ENCODE measurements at regions of chr6 and their contacts with region 1.

Region 1: DNA sequence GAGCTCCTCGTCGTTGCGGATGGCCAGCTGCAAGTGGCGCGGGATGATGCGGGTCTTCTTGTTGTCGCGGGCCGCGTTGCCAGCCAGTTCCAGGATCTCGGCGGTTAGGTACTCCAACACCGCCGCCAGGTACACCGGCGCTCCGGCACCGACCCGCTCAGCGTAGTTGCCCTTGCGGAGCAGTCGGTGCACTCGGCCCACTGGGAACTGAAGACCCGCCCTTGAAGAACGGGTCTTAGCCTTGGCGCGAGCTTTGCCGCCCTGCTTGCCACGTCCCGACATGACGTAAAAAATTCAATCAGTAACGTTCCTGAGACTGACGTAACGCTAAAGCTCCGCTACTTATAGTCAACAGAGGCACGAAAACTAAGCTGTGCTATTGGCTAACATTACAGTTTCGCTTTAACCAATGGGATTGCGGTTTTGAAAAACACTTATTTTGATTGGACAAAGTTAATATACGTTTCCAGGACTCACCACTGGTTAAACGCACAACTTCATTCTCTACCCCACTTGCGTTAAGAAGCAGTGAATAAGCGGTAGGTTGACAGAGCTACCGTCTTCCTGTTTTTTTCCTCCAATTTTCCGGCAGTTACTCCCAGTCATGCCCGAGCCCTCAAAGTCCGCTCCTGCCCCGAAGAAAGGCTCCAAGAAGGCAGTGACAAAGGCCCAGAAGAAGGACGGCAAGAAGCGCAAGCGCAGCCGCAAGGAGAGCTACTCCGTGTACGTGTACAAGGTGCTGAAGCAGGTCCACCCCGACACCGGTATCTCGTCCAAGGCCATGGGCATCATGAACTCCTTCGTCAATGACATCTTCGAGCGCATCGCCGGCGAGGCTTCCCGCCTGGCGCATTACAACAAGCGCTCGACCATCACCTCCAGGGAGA is 73.9 kb downstream of the OR2B2 start:
- DNase-seq: peak; percentile 87
- ATAC-seq: peak; percentile 92

Region 2: DNA sequence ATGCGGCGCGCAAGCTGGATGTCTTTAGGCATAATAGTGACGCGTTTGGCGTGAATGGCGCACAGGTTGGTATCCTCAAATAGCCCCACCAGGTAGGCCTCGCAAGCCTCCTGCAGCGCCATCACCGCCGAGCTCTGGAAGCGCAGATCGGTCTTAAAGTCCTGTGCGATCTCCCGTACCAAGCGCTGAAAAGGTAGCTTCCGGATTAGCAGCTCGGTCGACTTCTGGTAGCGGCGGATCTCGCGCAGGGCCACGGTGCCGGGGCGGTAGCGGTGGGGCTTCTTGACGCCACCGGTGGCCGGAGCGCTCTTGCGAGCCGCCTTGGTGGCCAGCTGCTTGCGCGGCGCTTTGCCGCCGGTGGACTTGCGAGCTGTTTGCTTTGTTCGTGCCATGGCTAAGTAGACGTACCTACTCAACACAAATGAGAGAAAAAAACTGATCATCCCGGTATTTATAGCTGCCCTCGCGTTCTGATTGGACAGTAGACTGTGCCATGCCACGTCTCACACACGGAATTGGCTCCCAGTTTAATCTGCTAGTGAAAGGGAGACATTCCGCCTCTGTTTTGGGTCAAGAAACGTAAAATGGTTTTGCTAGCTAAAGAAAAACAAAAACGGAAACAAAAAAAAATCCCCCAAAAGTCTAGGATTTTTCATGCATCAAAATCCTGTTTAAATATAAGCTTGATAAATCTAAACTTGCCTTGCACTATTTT is 33.8 kb after region 1 on chr6:
- intact Hi-C with region 1: loop called (anchors 5 kb)
- DNase-seq: peak; percentile 78
- ATAC-seq: peak; percentile 82